CD14-positive monocyte (primary cell): ENCODE measurements at regions of chr3 and their contacts with region 1.

Region 1: GRCh38 chr3:4133558-4133957 is 169.6 kb upstream of the SETMAR start:
- DNase-seq: no peak
- H3K4me3 ChIP-seq: no peak overlapping the region
- H3K4me3 Mint-ChIP-seq: no peak overlapping the region
- H3K27ac ChIP-seq: no peak overlapping the region
- H3K27ac Mint-ChIP-seq: no peak overlapping the region
- H3K4me1 ChIP-seq: no peaks in the 10 kb centered on the region
- H3K4me1 Mint-ChIP-seq: no peaks in the 10 kb centered on the region
- H3K27me3 ChIP-seq: no peaks in the 10 kb centered on the region
- H3K27me3 Mint-ChIP-seq: no peaks in the 10 kb centered on the region
- CTCF ChIP-seq: no peak

Region 2: DNA sequence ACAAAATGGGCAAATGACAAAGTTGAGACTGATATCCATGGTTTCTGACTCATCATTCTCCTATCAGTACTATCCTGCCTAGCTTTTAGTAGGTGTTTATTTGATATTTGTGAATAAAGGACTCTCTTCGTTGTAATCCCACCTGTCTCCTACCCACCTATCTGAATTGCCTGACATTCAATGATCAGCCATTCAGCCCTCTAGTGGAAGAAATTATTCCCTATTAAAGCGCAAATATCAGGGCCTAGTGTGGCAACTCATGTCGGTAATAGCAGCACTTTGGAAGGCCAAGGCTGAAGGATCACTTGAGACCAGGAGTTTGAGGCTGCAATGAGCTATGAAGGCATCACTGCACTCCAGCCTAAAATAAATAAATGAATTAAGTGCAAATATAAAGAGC is 26.1 kb before region 1 on chr3:
- intact Hi-C with region 1: loop called in 1 of 2 experiments (anchors 2 kb)
- DNase-seq: no peak
- H3K4me3 ChIP-seq: no peak overlapping the region
- H3K4me3 Mint-ChIP-seq: no peak overlapping the region
- H3K27ac ChIP-seq: no peak overlapping the region
- H3K27ac Mint-ChIP-seq: no peak overlapping the region
- H3K4me1 ChIP-seq: no peaks in the 10 kb centered on the region
- H3K4me1 Mint-ChIP-seq: no peaks in the 10 kb centered on the region
- H3K27me3 ChIP-seq: no peaks in the 10 kb centered on the region
- H3K27me3 Mint-ChIP-seq: no peaks in the 10 kb centered on the region
- CTCF ChIP-seq: no peak